ENCODE measurements at regions of chr1 and their contacts with region 1.

Region 1: DNA sequence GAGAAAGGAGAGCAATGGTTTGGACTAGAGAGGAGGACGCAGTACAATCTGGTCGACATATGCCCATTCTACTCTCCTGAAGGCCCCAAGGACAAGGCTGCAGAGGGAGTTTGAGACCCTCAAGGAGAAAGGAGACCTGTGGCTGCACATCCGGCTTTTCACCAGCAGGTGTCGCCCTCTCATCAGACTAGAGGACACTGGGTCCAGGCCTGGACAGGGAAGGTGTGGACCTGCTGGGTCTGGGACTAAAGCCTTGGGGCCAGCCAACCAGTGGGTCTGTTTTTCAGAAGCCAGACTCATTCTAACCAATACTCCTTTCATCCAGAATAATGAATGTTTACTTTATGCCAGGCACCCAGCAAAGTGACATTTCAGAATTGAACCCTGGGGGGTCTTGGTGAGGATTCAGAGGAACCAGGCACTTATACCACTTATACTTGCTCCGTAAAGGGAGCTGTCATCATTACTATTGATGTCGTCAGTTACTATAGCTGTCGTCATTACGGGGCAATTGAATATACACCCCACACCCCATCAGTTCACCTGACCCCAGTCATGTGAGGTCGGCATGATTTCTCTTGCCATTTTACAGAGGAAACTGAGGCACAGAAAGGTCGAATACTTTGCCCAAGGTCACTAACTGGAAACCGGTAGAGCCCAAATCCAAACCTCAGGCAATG is 5.1 kb downstream of the SRARP start:
- DNase-seq: peak; percentile 43 to 69
- H3K4me3 ChIP-seq: no peak overlapping the region
- H3K27ac ChIP-seq: no peak overlapping the region
- H3K4me1 ChIP-seq: peaks cover 5% of the 10 kb centered on the region; the same call in 1 of the 2 replicates
- H3K27me3 ChIP-seq: no peaks in the 10 kb centered on the region
- CTCF ChIP-seq: peak; percentile 94

Region 2: DNA sequence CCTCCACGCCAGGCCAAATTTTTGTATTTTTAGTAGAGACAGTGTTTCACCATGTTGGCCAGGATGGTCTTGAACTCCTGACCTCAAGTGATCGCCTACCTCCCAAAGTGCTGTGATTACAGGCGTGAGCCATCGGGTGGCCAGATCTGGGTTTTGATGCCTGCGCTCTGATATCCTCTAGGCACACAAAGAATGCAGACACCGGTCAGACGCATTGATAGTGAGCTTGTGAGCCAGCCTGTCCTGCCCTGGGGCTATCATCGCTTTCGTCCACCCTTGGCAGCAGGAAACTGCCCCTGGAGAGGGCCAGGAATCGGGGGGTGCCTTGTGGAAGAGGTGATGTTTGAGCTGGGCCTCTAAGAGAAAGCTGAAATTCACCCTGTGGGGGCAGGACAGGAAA is 246.6 kb before region 1 on chr1:
- CTCF ChIA-PET with region 1: interaction called, 17 read pairs
- POLR2A ChIA-PET with region 1: no interaction called
- intact Hi-C with region 1: no loop called
- DNase-seq: no peak
- H3K4me3 ChIP-seq: no peak overlapping the region
- H3K27ac ChIP-seq: no peak overlapping the region
- H3K4me1 ChIP-seq: peaks cover 17% of the 10 kb centered on the region
- H3K27me3 ChIP-seq: no peaks in the 10 kb centered on the region
- CTCF ChIP-seq: no peak

Region 3: DNA sequence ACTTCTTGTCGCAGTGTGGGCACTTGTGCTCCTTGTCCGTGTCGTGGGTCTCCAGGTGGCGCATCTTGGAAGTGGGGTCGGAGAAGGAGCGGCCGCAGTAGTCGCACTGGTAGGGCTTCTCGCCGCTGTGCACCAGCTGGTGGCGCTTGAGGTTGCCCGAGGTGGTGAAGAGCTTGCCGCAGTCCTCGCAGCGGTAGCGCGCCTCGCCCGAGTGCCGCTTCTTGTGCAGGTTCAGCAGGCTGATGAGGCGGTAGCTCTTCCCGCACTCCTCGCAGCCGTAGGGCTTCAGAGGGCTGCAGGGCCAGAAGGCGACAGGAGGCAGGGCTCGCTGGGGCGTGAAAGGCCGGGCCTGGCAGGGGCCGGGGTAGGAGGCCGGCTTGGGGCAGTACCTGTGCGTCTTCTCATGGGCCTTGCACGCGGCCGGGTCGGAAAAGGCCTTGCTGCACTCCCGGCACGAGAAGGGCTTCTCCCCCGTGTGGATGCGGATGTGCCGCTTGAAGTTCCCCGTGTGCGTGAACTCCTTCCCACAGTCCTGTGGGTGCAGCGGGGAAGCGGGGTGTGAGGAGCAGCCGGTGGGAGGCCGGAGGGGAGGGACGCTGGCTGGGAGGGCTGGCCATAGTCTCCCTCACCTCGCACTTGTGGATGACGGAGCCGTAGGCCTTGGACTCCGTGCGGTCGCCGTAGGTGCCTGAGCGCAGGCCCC is 64.7 kb before region 1 on chr1:
- CTCF ChIA-PET with region 1: no interaction called
- POLR2A ChIA-PET with region 1: no interaction called
- intact Hi-C with region 1: no loop called
- DNase-seq: no peak
- H3K4me3 ChIP-seq: no peak overlapping the region
- H3K27ac ChIP-seq: no peak overlapping the region
- H3K4me1 ChIP-seq: no peaks in the 10 kb centered on the region
- H3K27me3 ChIP-seq: no peaks in the 10 kb centered on the region
- CTCF ChIP-seq: no peak

Region 4: GRCh38 chr1:16032388-16033103 is 23.4 kb after region 1 on chr1:
- CTCF ChIA-PET with region 1: no interaction called
- POLR2A ChIA-PET with region 1: no interaction called
- intact Hi-C with region 1: loop called (anchors 1 kb)
- DNase-seq: peak; percentile 64 to 89
- H3K4me3 ChIP-seq: no peak overlapping the region
- H3K27ac ChIP-seq: no peak overlapping the region
- H3K4me1 ChIP-seq: no peaks in the 10 kb centered on the region
- H3K27me3 ChIP-seq: no peaks in the 10 kb centered on the region
- CTCF ChIP-seq: peak; percentile 86

Region 5: GRCh38 chr1:16073490-16074119 is 64.4 kb after region 1 on chr1 and contains the start of gene FAM131C:
- CTCF ChIA-PET with region 1: no interaction called
- POLR2A ChIA-PET with region 1: no interaction called
- intact Hi-C with region 1: loop called (anchors 1 kb)
- DNase-seq: peak in 1 of 2 experiments; percentile 52
- H3K4me3 ChIP-seq: peak within 1 kb of the TSS; percentile 73
- H3K27ac ChIP-seq: no peak within 1 kb of the TSS
- H3K4me1 ChIP-seq: peaks cover 36% of the 10 kb centered on the region
- H3K27me3 ChIP-seq: no peaks in the 10 kb centered on the region
- CTCF ChIP-seq: 0 out of 2 replicates have a peak, but pooled peaks have one; percentile 25
- total RNA-seq, gene FAM131C: 7.4 and 12.3 TPM in 2 replicates

Region 6: GRCh38 chr1:16243936-16244649 is 234.9 kb after region 1 on chr1:
- CTCF ChIA-PET with region 1: no interaction called
- POLR2A ChIA-PET with region 1: no interaction called
- intact Hi-C with region 1: loop called (anchors 5 kb)
- DNase-seq: peak; percentile 60 to 73
- H3K4me3 ChIP-seq: no peak overlapping the region
- H3K27ac ChIP-seq: no peak overlapping the region
- H3K4me1 ChIP-seq: peaks cover 15% of the 10 kb centered on the region
- H3K27me3 ChIP-seq: no peaks in the 10 kb centered on the region
- CTCF ChIP-seq: peak; percentile 81

Region 7: GRCh38 chr1:16351994-16352841 is 343.0 kb after region 1 on chr1 and contains the start of gene FBXO42:
- CTCF ChIA-PET with region 1: no interaction called
- POLR2A ChIA-PET with region 1: no interaction called
- intact Hi-C with region 1: no loop called
- DNase-seq: peak; percentile 61 to 93
- H3K4me3 ChIP-seq: peak within 1 kb of the TSS; percentile 88
- H3K27ac ChIP-seq: peak within 1 kb of the TSS; percentile 80
- H3K4me1 ChIP-seq: peaks cover 30% of the 10 kb centered on the region
- H3K27me3 ChIP-seq: no peaks in the 10 kb centered on the region
- CTCF ChIP-seq: no peak; the same call in 1 of the 2 replicates
- total RNA-seq, gene FBXO42: 13.0 and 15.3 TPM in 2 replicates